CD4-positive, alpha-beta memory T cell (primary cell): ENCODE measurements at regions of chr4 and their contacts with region 1.

Region 1: GRCh38 chr4:127965062-127965802 is at the starts of genes ABHD18 and MFSD8:
- DNase-seq: peak; percentile 98 to 99 (median 99)
- H3K4me3 ChIP-seq: peak within 1 kb of the TSS; percentile 90 to 91
- H3K4me3 Mint-ChIP-seq: peak within 1 kb of the TSS; percentile 89 to 98 (median 96)
- H3K27ac ChIP-seq: peak within 1 kb of the TSS; percentile 92
- H3K27ac Mint-ChIP-seq: peak within 1 kb of the TSS; percentile 86 to 98 (median 97)
- H3K4me1 ChIP-seq: peaks cover 48% of the 10 kb centered on the region
- H3K4me1 Mint-ChIP-seq: peaks cover 27 to 58% (median 43%) of the 10 kb centered on the region in 4 donors
- H3K27me3 ChIP-seq: no peaks in the 10 kb centered on the region
- H3K27me3 Mint-ChIP-seq: no peaks in the 10 kb centered on the region
- total RNA-seq, gene ABHD18: 23.5 to 24.6 TPM
- total RNA-seq, gene MFSD8: 43.3 to 49.2 TPM

Region 2: DNA sequence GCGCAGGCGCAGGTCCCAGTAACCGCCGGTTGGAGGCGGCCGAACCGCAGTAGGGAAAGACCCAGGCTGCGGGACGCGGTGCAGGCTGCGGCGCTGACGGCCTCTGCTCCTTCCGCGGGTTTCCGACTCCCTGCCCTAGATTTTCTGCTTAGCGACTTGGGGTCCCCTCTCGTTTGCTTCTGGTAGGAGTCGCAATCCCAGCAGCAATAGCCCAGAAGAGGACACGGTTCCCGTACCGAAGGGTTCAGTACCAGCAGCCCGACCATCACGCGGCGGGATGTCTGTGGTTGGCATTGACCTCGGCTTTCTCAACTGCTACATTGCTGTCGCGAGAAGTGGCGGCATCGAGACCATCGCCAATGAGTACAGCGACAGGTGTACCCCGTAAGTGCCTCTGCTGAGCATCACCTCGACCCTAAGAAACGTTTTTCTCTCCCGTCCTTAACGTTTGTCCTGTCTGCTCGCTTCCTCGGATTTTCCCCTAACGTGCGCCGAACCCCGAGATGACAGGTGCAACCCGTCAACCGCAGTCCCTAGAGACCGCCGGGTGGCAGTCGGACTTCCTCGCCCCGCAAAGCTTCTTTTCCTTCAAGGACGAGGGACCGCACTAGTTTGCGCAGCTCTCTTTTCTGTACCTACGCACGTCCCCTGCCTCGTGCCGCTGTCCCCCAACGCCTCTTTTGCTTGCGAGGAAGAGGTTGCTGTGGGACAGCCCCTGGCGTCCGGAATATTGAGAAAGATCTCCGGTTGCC is 182.8 kb before region 1 on chr4 and contains the start of gene HSPA4L:
- CTCF ChIA-PET with region 1: no interaction called
- POLR2A ChIA-PET with region 1: no interaction called
- intact Hi-C with region 1: loop called (anchors 5 kb)
- DNase-seq: peak; percentile 24 to 34 (median 30)
- H3K4me3 ChIP-seq: peak within 1 kb of the TSS; percentile 57 to 81
- H3K4me3 Mint-ChIP-seq: peak within 1 kb of the TSS; percentile 88 to 96 (median 92)
- H3K27ac ChIP-seq: no peak within 1 kb of the TSS
- H3K27ac Mint-ChIP-seq: peak within 1 kb of the TSS in 5 of 7 donors; percentile 29 to 89 (median 49)
- H3K4me1 ChIP-seq: peaks cover 11% of the 10 kb centered on the region
- H3K4me1 Mint-ChIP-seq: peaks cover 10 to 24% (median 17%) of the 10 kb centered on the region in 4 donors
- H3K27me3 ChIP-seq: peaks cover 16% of the 10 kb centered on the region
- H3K27me3 Mint-ChIP-seq: peaks cover 38 to 51% of the 10 kb centered on the region in 2 donors
- total RNA-seq, gene HSPA4L: not detected

Region 3: DNA sequence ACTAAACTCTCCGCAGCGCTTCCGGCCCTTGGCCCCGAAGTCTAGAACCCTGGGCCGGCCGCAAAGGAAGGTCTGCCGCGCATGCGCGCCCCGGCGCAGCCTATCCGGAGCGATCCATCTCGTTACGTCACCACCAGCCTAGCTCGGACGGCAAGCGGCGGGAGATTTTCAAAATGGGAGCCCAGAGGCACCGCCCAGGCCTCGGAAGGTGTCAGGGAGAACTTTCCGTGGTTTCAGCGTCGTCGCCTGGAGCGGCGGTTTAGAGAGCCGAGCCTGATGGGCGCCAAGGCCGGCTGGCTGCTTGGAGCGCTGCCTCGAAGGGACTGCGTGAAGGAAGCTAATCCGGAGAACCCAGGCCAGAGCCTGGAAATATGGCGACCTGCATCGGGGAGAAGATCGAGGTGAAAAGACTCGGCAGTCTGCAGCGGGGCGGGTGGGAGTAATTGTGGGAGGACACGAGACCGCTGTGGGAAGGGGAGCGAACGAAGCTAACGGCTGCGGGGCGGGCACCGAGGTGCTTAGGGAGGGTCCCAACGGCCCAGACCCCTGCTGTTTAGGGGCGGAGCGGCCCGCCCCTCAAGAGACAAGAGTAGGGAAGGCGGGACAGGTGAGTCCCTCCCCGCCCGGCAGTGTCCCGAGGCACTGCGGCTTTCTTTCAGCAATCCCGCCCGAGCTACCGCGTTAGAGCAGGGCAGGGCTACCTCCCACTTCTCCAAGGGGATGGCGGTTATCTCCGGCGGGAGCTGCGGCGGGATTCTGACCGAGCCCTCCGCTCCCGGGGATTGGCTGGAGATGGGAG is 84.3 kb before region 1 on chr4 and contains the start of gene PLK4:
- CTCF ChIA-PET with region 1: interaction called, 17 read pairs
- POLR2A ChIA-PET with region 1: interaction called, 35 read pairs
- intact Hi-C with region 1: loop called (anchors 1 kb)
- DNase-seq: peak; percentile 92 to 95 (median 93)
- H3K4me3 ChIP-seq: peak within 1 kb of the TSS; percentile 79 to 93
- H3K4me3 Mint-ChIP-seq: peak within 1 kb of the TSS; percentile 96 to 100 (median 97)
- H3K27ac ChIP-seq: peak within 1 kb of the TSS; percentile 68
- H3K27ac Mint-ChIP-seq: peak within 1 kb of the TSS; percentile 96 to 100 (median 98)
- H3K4me1 ChIP-seq: peaks cover 14% of the 10 kb centered on the region
- H3K4me1 Mint-ChIP-seq: peaks cover 8 to 28% (median 18%) of the 10 kb centered on the region in 4 donors
- H3K27me3 ChIP-seq: no peaks in the 10 kb centered on the region
- H3K27me3 Mint-ChIP-seq: no peaks in the 10 kb centered on the region
- total RNA-seq, gene PLK4: 1.1 to 2.6 TPM

Region 4: DNA sequence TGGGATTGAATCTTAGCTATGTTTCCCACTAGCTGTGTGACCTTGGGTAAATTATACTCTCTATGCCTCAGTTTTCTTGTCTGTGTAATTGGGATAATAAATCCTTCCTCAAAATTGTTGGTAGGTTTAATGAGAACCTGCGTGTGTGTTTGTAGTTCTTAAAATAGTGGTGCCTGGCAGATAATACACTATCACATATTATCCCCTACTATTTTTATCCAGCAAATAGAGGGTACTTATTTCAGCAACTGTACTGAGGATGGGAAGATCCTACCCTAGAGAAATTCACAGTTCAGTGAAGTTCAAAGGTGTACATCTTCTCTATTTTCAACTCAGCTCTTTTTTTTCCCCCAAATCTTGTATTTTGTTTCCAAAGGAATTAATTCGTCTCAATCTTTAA is 17.2 kb after region 1 on chr4:
- CTCF ChIA-PET with region 1: interaction called, 3 read pairs
- POLR2A ChIA-PET with region 1: interaction called, 3 read pairs
- intact Hi-C with region 1: loop called (anchors 2 kb)
- DNase-seq: no peak
- H3K4me3 ChIP-seq: no peak overlapping the region
- H3K4me3 Mint-ChIP-seq: no peak overlapping the region
- H3K27ac ChIP-seq: no peak overlapping the region
- H3K27ac Mint-ChIP-seq: peak overlapping the region in 2 of 7 donors; percentile 5 to 24
- H3K4me1 ChIP-seq: no peaks in the 10 kb centered on the region
- H3K4me1 Mint-ChIP-seq: peaks cover 0 to 4% (median 1%) of the 10 kb centered on the region in 4 donors
- H3K27me3 ChIP-seq: no peaks in the 10 kb centered on the region
- H3K27me3 Mint-ChIP-seq: no peaks in the 10 kb centered on the region

Region 5: DNA sequence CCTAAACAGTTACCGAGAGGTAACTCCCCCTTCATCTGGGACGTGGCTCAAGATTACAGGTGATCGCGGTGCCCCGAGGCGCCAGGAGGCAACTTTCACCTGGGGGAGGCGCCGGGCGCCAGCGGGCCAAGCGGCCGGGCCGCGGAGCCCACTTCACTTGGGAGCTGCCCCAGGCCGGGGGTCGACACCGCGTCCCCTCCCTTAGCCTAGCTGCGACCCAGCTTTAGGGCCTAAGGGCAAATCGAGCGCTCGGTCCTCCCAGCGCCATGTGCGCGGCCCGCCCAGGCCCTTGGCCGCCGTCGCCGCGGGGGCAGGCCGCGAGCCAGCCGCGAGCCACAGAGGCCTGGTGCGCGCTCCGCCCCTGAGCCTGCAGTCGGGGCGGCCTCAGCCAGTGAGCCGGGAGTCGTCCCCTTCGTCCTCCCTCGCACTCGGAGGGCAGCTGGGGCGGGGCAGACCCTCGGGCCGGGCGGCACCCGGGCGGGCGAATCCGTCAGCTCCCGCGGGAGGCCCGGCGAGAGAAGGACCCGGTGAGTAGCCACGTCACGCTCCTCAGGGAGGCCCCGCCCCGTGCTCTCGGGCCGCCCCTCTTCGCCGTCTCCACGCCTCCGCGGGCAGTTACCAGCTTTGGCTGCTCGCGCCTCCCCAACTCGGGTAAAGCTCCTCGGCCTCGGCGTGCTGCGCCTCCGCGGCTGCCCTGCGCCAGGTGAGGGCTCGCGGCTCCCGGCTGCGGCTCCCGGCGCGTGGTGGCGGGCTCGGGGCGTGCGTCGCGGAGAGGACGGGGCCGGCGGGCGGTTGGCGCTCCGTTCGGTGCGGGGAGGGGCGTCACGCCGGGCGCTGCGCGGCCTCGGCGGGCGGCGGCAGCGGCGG is 95.7 kb after region 1 on chr4 and contains the start of gene LARP1B:
- CTCF ChIA-PET with region 1: interaction called, 21 read pairs
- POLR2A ChIA-PET with region 1: interaction called, 113 read pairs
- intact Hi-C with region 1: loop called (anchors 1 kb)
- DNase-seq: peak; percentile 90 to 93 (median 92)
- H3K4me3 ChIP-seq: peak within 1 kb of the TSS; percentile 74 to 76
- H3K4me3 Mint-ChIP-seq: peak within 1 kb of the TSS; percentile 86 to 91 (median 88)
- H3K27ac ChIP-seq: peak within 1 kb of the TSS; percentile 85
- H3K27ac Mint-ChIP-seq: peak within 1 kb of the TSS; percentile 90 to 96 (median 91)
- H3K4me1 ChIP-seq: peaks cover 17% of the 10 kb centered on the region
- H3K4me1 Mint-ChIP-seq: peaks cover 10 to 17% (median 13%) of the 10 kb centered on the region in 4 donors
- H3K27me3 ChIP-seq: no peaks in the 10 kb centered on the region
- H3K27me3 Mint-ChIP-seq: no peaks in the 10 kb centered on the region
- total RNA-seq, gene LARP1B: 15.8 to 19.1 TPM

Region 6: GRCh38 chr4:128287871-128288688 is 322.8 kb after region 1 on chr4:
- CTCF ChIA-PET with region 1: interaction called, 6 read pairs
- POLR2A ChIA-PET with region 1: interaction called, 14 read pairs
- intact Hi-C with region 1: loop called (anchors 1 kb)
- DNase-seq: peak; percentile 97 to 100 (median 99)
- H3K4me3 ChIP-seq: peak overlapping the region; percentile 33 to 87
- H3K4me3 Mint-ChIP-seq: peak overlapping the region; percentile 81 to 91 (median 88)
- H3K27ac ChIP-seq: peak overlapping the region; percentile 88
- H3K27ac Mint-ChIP-seq: peak overlapping the region; percentile 80 to 97 (median 96)
- H3K4me1 ChIP-seq: peaks cover 43% of the 10 kb centered on the region
- H3K4me1 Mint-ChIP-seq: peaks cover 24 to 42% (median 31%) of the 10 kb centered on the region in 4 donors
- H3K27me3 ChIP-seq: no peaks in the 10 kb centered on the region
- H3K27me3 Mint-ChIP-seq: no peaks in the 10 kb centered on the region

Region 7: GRCh38 chr4:129093191-129093920 is 1128.1 kb after region 1 on chr4 and contains the start of gene SCLT1:
- CTCF ChIA-PET with region 1: no interaction called
- POLR2A ChIA-PET with region 1: interaction called, 13 read pairs
- intact Hi-C with region 1: loop called (anchors 1 kb)
- DNase-seq: peak; percentile 93 to 98 (median 95)
- H3K4me3 ChIP-seq: peak within 1 kb of the TSS; percentile 71 to 98
- H3K4me3 Mint-ChIP-seq: peak within 1 kb of the TSS in 6 of 8 donors; percentile 10 to 57 (median 30)
- H3K27ac ChIP-seq: peak within 1 kb of the TSS; percentile 99
- H3K27ac Mint-ChIP-seq: peak within 1 kb of the TSS in 2 of 7 donors; percentile 33 to 95
- H3K4me1 ChIP-seq: peaks cover 63% of the 10 kb centered on the region
- H3K4me1 Mint-ChIP-seq: peaks cover 30 to 47% (median 38%) of the 10 kb centered on the region in 4 donors
- H3K27me3 ChIP-seq: no peaks in the 10 kb centered on the region
- H3K27me3 Mint-ChIP-seq: no peaks in the 10 kb centered on the region
- total RNA-seq, gene SCLT1: 18.2 to 20.8 TPM